CD8-positive, alpha-beta T cell (primary cell): ENCODE measurements at regions of chr19 and their contacts with region 1.

Region 1: DNA sequence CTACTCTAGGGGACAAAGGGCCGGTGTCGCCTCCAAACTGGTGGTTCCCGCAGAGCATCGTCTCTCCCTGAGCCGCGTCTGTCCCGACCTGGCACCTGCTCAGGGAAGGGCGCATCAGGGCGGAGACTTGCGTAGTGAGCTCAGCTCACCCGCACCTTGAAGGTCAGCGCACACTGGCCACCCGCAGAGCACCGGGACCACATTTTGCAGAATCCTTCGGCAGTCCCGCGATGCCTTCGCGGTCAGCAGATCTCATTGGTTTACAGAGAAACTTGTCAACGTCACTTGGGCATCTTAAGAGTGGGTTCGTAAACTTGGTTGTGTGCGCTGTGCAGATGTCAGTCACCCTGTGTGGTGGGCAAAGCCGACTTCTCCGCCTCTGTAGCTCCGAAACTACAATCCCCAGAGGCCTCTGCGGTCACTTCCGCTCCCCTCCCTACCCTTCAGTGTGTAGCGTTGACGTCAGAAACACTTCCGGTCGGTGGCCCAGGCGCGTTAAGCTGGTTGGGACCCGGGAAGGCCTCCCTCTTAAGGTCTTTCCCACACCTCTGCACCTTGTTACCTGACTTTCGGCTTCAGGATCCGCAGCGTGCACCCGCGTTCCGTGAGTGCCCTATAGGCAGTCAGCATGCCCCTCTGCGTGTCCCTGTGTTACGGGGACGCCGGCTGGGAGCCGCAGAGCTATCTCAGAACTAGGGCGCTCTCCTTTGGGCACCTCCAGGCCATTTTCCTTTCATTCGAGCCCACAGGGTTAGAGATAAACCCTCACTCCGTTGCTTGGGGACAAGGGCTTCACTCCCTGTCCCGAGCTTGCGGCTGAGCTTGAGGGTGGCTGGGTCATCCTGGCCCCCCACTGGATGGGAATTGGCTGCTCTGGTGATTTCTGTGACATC is 36.5 kb upstream of the ZNF527 start:
- DNase-seq: peak; percentile 75 to 96 (median 87)
- ATAC-seq: peak; percentile 97
- H3K4me3 ChIP-seq: peak overlapping the region; percentile 46 to 74
- H3K4me3 Mint-ChIP-seq: peak overlapping the region; percentile 96
- H3K27ac ChIP-seq: peak overlapping the region; percentile 46 to 87
- H3K27ac Mint-ChIP-seq: peak overlapping the region; percentile 95
- H3K4me1 ChIP-seq: peaks cover 10% of the 10 kb centered on the region
- H3K4me1 Mint-ChIP-seq: peaks cover 47% of the 10 kb centered on the region
- H3K27me3 ChIP-seq: no peaks in the 10 kb centered on the region
- H3K27me3 Mint-ChIP-seq: no peaks in the 10 kb centered on the region
- CTCF ChIP-seq: no peak

Region 2: DNA sequence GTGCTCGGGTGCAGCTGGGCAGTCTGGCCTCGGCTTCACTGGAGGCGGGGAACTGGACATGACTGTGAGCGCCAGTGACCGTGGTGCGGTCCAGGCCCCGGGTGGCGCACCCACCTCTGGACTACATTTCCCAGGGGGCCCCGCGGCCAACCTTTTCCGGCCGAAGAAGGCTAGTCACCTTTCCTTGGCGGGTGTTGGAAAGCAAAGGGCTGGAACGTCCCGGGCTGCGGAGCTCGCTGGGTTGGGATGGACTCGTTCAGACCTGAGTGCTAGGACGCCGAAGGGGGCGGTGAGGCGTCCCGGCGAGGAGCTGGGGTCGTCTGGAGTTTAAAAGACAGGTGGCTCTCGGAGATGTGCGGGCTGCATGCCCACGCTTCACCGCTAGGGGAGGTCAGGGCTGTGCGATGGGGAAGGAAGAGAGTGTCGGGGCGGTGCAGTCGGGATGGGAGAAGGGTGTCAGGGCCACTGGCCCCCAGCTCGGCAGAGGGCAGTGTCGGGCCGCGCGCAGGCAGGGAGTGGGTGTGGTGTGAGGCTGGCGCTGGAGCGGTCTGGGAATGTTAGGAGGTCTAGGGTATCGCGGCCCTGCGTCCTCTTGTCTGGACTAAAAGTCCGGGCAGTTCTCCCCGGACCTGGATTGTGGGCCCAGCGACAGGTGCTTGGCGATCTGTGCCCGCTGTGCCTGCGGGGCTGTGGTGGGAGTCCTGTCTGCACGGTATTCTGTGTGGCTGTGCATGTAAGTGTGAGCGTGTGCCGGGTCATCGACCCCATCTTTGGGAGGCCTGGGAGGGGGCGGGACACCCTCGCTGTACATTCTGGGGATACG is 361.2 kb before region 1 on chr19:
- CTCF ChIA-PET with region 1: no interaction called
- POLR2A ChIA-PET with region 1: no interaction called
- intact Hi-C with region 1: loop called (anchors 5 kb)
- DNase-seq: peak; percentile 49 to 92 (median 77)
- ATAC-seq: peak; percentile 90
- H3K4me3 ChIP-seq: peak overlapping the region; percentile 59 to 100
- H3K4me3 Mint-ChIP-seq: peak overlapping the region; percentile 90
- H3K27ac ChIP-seq: peak overlapping the region; percentile 53 to 66
- H3K27ac Mint-ChIP-seq: peak overlapping the region; percentile 88
- H3K4me1 ChIP-seq: peaks cover 15% of the 10 kb centered on the region
- H3K4me1 Mint-ChIP-seq: peaks cover 24% of the 10 kb centered on the region
- H3K27me3 ChIP-seq: no peaks in the 10 kb centered on the region
- H3K27me3 Mint-ChIP-seq: no peaks in the 10 kb centered on the region
- CTCF ChIP-seq: no peak

Region 3: GRCh38 chr19:37506387-37507166 is 172.2 kb after region 1 on chr19 and contains the start of gene ZNF793:
- CTCF ChIA-PET with region 1: no interaction called
- POLR2A ChIA-PET with region 1: no interaction called
- intact Hi-C with region 1: loop called in 1 of 2 experiments (anchors 1 kb)
- DNase-seq: peak; percentile 53 to 89 (median 83)
- ATAC-seq: peak; percentile 87
- H3K4me3 ChIP-seq: peak within 1 kb of the TSS; percentile 82 to 86
- H3K4me3 Mint-ChIP-seq: no peak within 1 kb of the TSS
- H3K27ac ChIP-seq: peak within 1 kb of the TSS; percentile 94 to 97
- H3K27ac Mint-ChIP-seq: no peak within 1 kb of the TSS
- H3K4me1 ChIP-seq: peaks cover 16% of the 10 kb centered on the region
- H3K4me1 Mint-ChIP-seq: no peaks in the 10 kb centered on the region
- H3K27me3 ChIP-seq: no peaks in the 10 kb centered on the region
- H3K27me3 Mint-ChIP-seq: no peaks in the 10 kb centered on the region
- CTCF ChIP-seq: no peak
- total RNA-seq, gene ZNF793: 2.4 to 3.3 TPM

Region 4: GRCh38 chr19:37635076-37636056 is 300.9 kb after region 1 on chr19:
- CTCF ChIA-PET with region 1: no interaction called
- POLR2A ChIA-PET with region 1: no interaction called
- intact Hi-C with region 1: no loop called
- DNase-seq: no peak
- ATAC-seq: no peak
- H3K4me3 ChIP-seq: no peak overlapping the region
- H3K4me3 Mint-ChIP-seq: no peak overlapping the region
- H3K27ac ChIP-seq: no peak overlapping the region
- H3K27ac Mint-ChIP-seq: no peak overlapping the region
- H3K4me1 ChIP-seq: no peaks in the 10 kb centered on the region
- H3K4me1 Mint-ChIP-seq: no peaks in the 10 kb centered on the region
- H3K27me3 ChIP-seq: no peaks in the 10 kb centered on the region
- H3K27me3 Mint-ChIP-seq: no peaks in the 10 kb centered on the region
- CTCF ChIP-seq: no peak

Region 5: GRCh38 chr19:37855098-37855497 is 520.7 kb after region 1 on chr19:
- CTCF ChIA-PET with region 1: no interaction called
- POLR2A ChIA-PET with region 1: no interaction called
- intact Hi-C with region 1: no loop called
- DNase-seq: peak in 5 of 9 experiments; percentile 3 to 14 (median 8)
- ATAC-seq: no peak
- H3K4me3 ChIP-seq: no peak overlapping the region
- H3K4me3 Mint-ChIP-seq: no peak overlapping the region
- H3K27ac ChIP-seq: no peak overlapping the region
- H3K27ac Mint-ChIP-seq: no peak overlapping the region
- H3K4me1 ChIP-seq: no peaks in the 10 kb centered on the region
- H3K4me1 Mint-ChIP-seq: no peaks in the 10 kb centered on the region
- H3K27me3 ChIP-seq: no peaks in the 10 kb centered on the region
- H3K27me3 Mint-ChIP-seq: peaks cover 17% of the 10 kb centered on the region
- CTCF ChIP-seq: no peak